ENCODE measurements at regions of chr16 and their contacts with region 1.

Region 1: DNA sequence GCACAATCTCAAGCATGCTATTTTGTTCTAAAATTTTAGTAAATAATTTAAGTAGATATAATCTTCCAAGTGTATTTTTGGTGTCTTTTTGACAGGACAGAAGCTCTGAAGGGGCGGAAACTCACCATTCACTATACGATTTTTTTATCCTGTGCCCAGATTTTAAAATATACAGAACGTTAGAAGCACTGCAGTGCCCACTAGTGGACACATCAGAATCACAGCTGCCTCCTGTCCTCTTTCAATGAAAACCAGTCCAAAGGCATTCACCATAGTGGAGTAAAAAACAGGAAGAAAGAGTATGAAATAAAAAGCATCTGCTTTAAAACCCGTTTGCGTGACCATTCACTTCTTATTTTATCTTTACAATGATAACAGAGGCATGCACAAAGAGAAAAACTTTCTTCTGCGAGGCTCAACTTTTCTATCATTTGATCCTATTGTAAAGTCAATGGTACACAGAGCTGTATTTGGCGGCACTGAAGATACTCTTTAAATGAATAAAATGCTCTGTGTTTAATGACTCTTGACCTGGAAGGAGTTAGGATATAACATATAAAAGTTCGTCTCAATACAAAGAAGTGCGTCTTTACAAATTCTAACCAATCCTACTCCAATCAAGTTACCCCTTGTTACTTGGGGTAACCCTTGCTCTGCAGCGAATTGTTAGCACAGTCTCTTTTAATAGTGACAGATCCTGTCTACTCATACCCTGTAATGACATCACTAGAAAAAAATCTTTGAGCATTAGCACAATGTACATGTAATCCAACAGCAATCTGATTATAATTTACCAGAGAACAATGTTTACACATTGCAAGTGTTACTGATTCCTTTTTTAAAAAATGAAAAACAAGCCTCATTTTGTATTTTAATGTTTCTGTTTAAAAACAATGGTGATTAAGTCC is 339.8 kb upstream of the PSMD7 start:
- DNase-seq: peak in 4 of 5 donors; percentile 4 to 23 (median 8)
- H3K4me3 ChIP-seq: no peak overlapping the region
- H3K4me3 Mint-ChIP-seq: no peak overlapping the region
- H3K27ac ChIP-seq: no peak overlapping the region
- H3K27ac Mint-ChIP-seq: no peak overlapping the region
- H3K4me1 ChIP-seq: no peaks in the 10 kb centered on the region
- H3K4me1 Mint-ChIP-seq: no peaks in the 10 kb centered on the region
- H3K27me3 ChIP-seq: no peaks in the 10 kb centered on the region
- H3K27me3 Mint-ChIP-seq: peaks cover 1 to 3% of the 10 kb centered on the region in 2 donors

Region 2: GRCh38 chr16:72501739-72502593 is 1454.9 kb before region 1 on chr16:
- CTCF ChIA-PET with region 1: no interaction called
- POLR2A ChIA-PET with region 1: no interaction called
- intact Hi-C with region 1: loop called (anchors 5 kb)
- DNase-seq: peak in 2 of 5 donors; percentile 1 to 38
- H3K4me3 ChIP-seq: no peak overlapping the region
- H3K4me3 Mint-ChIP-seq: no peak overlapping the region
- H3K27ac ChIP-seq: no peak overlapping the region
- H3K27ac Mint-ChIP-seq: peak overlapping the region in 2 of 7 donors; percentile 32 to 78
- H3K4me1 ChIP-seq: no peaks in the 10 kb centered on the region
- H3K4me1 Mint-ChIP-seq: peaks cover 0 to 6% (median 2%) of the 10 kb centered on the region in 4 donors
- H3K27me3 ChIP-seq: no peaks in the 10 kb centered on the region
- H3K27me3 Mint-ChIP-seq: peaks cover 0 to 2% of the 10 kb centered on the region in 2 donors

Region 3: DNA sequence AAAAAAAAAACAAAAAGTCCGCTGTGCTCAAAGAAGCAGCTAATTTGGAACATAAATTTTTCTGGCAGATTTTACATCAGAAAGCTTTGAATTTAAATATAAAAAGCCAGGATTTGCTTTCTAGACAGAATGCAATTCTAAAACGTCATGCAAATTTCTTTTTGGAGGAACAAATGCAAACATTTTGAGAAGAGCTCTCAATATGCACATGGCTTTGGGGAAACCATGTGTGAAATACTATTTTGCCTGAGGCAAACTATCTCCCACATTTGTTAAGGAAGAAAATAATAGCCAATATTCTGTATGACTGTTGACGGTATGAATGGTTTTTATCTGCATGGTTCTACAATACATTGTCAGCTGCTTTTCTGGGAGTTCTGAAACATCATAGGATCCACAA is 19.8 kb after region 1 on chr16:
- CTCF ChIA-PET with region 1: no interaction called
- POLR2A ChIA-PET with region 1: no interaction called
- intact Hi-C with region 1: no loop called
- DNase-seq: no peak
- H3K4me3 ChIP-seq: no peak overlapping the region
- H3K4me3 Mint-ChIP-seq: no peak overlapping the region
- H3K27ac ChIP-seq: no peak overlapping the region
- H3K27ac Mint-ChIP-seq: no peak overlapping the region
- H3K4me1 ChIP-seq: no peaks in the 10 kb centered on the region
- H3K4me1 Mint-ChIP-seq: no peaks in the 10 kb centered on the region
- H3K27me3 ChIP-seq: no peaks in the 10 kb centered on the region
- H3K27me3 Mint-ChIP-seq: peaks cover 0 to 3% of the 10 kb centered on the region in 2 donors